Sigmoid colon (tissue), 7 donors: ENCODE measurements at regions of chr20 and their contacts with region 1.

Region 1: GRCh38 chr20:17611540-17612286 is 41.8 kb downstream of the DSTN start:
- DNase-seq: peak; percentile 77
- H3K4me3 ChIP-seq: no peak overlapping the region
- H3K27ac ChIP-seq: peak overlapping the region; percentile 86 to 100 (median 92)
- H3K4me1 ChIP-seq: peaks cover 0 to 96% (median 92%) of the 10 kb centered on the region in 4 donors
- H3K27me3 ChIP-seq: no peaks in the 10 kb centered on the region
- CTCF ChIP-seq: peak in 3 of 4 experiments; percentile 41 to 49 (median 43)
- EP300 ChIP-seq: no peak
- POLR2A ChIP-seq: no peak

Region 2: GRCh38 chr20:17530716-17531664 is 80.7 kb before region 1 on chr20 and contains the start of gene BFSP1:
- intact Hi-C with region 1: loop called (anchors 2 kb)
- DNase-seq: no peak
- H3K4me3 ChIP-seq: peak within 1 kb of the TSS; percentile 37 to 66 (median 62)
- H3K27ac ChIP-seq: peak within 1 kb of the TSS; percentile 77 to 92 (median 86)
- H3K4me1 ChIP-seq: peaks cover 0 to 24% (median 13%) of the 10 kb centered on the region in 4 donors
- H3K27me3 ChIP-seq: no peaks in the 10 kb centered on the region
- CTCF ChIP-seq: no peak
- EP300 ChIP-seq: no peak
- POLR2A ChIP-seq: no peak
- total RNA-seq, gene BFSP1: 1.1 to 3.6 (median 1.5) TPM

Region 3: GRCh38 chr20:17536944-17537444 is 74.7 kb before region 1 on chr20:
- intact Hi-C with region 1: loop called (anchors 1 kb)
- DNase-seq: peak; percentile 90
- H3K4me3 ChIP-seq: no peak overlapping the region
- H3K27ac ChIP-seq: peak overlapping the region; percentile 61 to 78 (median 68)
- H3K4me1 ChIP-seq: peaks cover 0 to 60% (median 49%) of the 10 kb centered on the region in 4 donors
- H3K27me3 ChIP-seq: no peaks in the 10 kb centered on the region
- CTCF ChIP-seq: peak; percentile 92 to 99 (median 99)
- EP300 ChIP-seq: no peak
- POLR2A ChIP-seq: no peak

Region 4: DNA sequence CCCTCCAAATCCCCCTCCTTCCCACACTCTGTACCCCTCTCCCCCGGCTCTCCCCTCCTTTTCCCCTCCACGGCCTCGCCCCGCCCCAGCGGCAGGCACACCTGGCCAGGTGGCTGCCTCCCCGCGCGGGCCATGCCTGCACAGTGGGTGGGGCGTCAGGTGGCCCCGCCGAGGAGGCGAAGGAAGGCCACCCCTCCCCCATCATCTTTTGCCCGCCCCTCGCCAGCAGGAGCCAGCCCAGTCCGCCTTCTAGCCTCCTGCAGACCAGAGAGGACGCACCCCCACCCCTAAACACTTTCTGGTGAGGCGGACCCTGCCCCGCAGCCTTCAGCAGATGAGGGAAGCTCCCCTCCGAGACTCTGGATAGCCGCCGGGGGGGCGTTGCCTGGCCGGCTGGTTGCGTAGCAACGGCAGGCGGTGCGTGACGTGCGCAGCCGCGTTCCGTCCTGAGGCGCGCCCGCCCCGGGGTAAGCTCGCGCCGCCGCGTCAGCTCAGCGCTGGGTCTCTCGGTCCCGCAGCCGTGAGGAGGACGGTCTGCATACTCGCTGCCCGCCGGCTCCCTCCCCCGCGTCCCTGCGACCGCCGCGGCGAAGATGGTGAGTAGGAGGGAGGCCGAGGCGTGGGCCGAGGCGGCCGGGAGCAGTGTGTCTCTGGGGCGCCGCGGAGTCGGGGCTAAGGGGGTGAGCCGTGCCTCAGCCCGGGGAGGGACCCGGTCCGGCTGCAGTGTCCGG is 41.9 kb before region 1 on chr20 and contains the start of gene DSTN:
- intact Hi-C with region 1: loop called (anchors 2 kb)
- DNase-seq: peak; percentile 98
- H3K4me3 ChIP-seq: peak within 1 kb of the TSS; percentile 80 to 100 (median 97)
- H3K27ac ChIP-seq: peak within 1 kb of the TSS; percentile 99 to 100 (median 100)
- H3K4me1 ChIP-seq: peaks cover 3 to 56% (median 48%) of the 10 kb centered on the region in 4 donors
- H3K27me3 ChIP-seq: no peaks in the 10 kb centered on the region
- CTCF ChIP-seq: no peak
- EP300 ChIP-seq: peak in 2 of 4 donors; percentile 56 to 86
- POLR2A ChIP-seq: peak; percentile 98
- total RNA-seq, gene DSTN: 1,872 to 2,237 (median 1,948) TPM